A549 (cell line): ENCODE measurements at regions of chr4 and their contacts with region 1.

Region 1: DNA sequence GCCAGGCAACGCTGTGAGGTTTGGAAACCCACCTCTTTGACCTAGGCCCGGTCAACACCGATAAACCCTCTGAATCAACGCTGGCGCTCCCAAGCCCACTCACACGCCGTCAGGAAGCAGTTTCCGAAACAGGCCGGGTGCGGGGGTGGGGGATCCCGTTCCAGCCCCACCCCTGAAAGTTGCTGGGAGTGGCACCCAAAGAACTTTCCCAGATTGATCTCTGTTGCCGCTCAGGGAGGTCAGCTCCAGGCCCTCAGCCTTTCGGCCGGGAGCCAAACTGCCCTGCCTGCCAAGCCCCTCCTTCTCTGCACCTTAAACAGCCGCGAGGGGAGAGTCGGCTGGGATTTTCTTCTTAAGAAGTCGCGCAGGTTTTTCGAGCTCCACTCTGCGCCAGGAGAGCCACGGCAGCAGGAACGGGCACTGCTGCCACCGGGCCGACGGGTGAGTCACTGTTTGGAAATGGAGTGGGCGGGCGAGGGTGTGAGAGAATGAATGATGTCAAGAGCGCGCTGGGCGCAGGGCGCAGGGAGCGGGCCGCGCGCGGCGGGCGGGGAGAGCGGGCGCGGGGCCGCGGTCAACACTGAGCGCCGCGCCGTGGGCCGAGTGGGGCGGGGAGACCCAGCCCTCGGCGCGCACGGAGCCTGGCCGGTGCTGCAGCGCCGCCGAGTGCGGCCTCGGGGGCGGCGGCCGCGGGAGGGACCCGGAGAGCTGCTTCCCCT is at the start of gene SGMS2:
- DNase-seq: peak; percentile 68 to 87
- ATAC-seq: peak; percentile 89 to 95
- H3K4me3 ChIP-seq: peak within 1 kb of the TSS; percentile 91
- H3K27ac ChIP-seq: peak within 1 kb of the TSS; percentile 84 to 92
- H3K4me1 ChIP-seq: peaks cover 21% of the 10 kb centered on the region
- CTCF ChIP-seq: no peak
- EP300 ChIP-seq: no peak
- POLR2A ChIP-seq: peak; percentile 34; the same call in 1 of the 2 replicates
- RAD21 ChIP-seq: 0 out of 5 replicates have a peak, but pooled peaks of 1 of the 2 experiments have one; percentile 14
- polyA plus RNA-seq, gene SGMS2: 22.6 and 24.1 TPM in 2 replicates

Region 2: DNA sequence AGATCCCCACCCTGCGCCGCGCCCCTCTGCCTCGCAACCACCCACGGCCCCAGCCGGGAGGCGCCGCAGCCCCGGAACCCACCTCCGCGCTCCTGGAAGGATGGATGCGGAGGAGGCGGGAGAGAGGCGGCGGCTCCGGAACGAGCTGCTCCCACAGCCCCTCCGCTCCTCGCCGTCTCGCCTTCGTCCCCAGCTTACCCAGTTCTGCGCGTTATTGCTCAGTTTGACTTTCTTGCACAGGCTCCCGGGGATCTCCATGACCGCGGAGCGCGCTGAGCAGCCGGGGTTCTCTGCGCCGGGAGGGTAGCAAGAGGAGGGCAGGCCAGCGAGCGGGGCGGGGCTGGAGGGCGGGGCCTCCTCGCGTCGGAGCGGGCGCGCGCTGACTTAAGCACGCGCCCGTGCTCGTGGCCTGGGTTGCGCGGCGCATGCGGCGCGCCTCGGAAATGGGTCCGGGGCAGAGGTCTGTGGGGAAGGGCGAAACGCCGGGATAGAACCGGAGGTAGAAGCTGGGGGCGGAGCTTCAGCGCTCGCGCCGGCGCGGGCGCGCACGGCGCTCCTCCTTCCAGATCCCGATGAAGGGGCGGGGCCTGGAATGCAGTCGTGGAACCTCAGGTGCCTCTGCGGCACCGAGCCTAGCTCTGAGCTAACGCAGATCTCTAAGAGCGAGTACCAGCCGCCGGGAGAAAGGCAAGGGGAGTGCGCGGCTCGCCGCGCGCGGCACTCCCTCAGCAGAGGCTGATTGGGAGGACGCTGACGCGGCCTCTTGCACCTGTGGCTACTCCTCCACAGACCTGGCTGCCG is 104.4 kb before region 1 on chr4 and contains the start of gene PAPSS1:
- CTCF ChIA-PET with region 1: no interaction called
- POLR2A ChIA-PET with region 1: interaction called, 12 read pairs
- DNase-seq: peak; percentile 64 to 92
- ATAC-seq: peak; percentile 92 to 97
- H3K4me3 ChIP-seq: peak within 1 kb of the TSS; percentile 72
- H3K27ac ChIP-seq: peak within 1 kb of the TSS; percentile 83 to 93
- H3K4me1 ChIP-seq: peaks cover 8% of the 10 kb centered on the region; the same call in 2 of the 3 replicates
- CTCF ChIP-seq: no peak
- EP300 ChIP-seq: no peak
- POLR2A ChIP-seq: peak; percentile 61
- RAD21 ChIP-seq: no peak
- polyA plus RNA-seq, gene PAPSS1: 42.9 and 52.5 TPM in 2 replicates

Region 3: GRCh38 chr4:108247387-108248049 is 423.0 kb after region 1 on chr4:
- CTCF ChIA-PET with region 1: no interaction called
- POLR2A ChIA-PET with region 1: no interaction called
- DNase-seq: no peak
- ATAC-seq: no peak
- H3K4me3 ChIP-seq: no peak overlapping the region
- H3K27ac ChIP-seq: no peak overlapping the region
- H3K4me1 ChIP-seq: no peaks in the 10 kb centered on the region
- CTCF ChIP-seq: no peak
- EP300 ChIP-seq: no peak
- POLR2A ChIP-seq: no peak
- RAD21 ChIP-seq: no peak